Endothelial cell of umbilical vein (primary cell): ENCODE measurements at regions of chr19 and their contacts with region 1.

Region 1: DNA sequence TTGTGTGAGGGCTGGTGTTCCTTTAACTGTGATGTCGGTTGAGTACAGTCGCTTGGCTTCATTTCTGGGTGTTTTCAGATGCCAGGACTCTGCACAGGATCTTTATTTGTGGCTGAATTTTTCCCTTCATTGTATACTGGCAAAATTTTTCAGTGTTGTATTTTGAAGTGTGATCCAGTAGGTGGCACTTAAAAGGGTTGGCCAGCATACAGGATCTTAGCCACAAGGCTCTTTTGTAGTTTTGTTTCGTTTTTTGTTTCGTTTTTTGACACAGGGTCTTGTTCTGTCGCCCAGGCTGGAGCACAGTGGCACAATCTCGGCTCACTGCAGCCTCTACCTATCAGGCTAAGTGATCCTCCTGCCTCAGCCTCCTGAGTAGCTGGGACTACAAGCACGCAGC is 8.7 kb downstream of the FCAR start:
- DNase-seq: peak; percentile 9
- H3K4me3 ChIP-seq: no peak overlapping the region
- H3K27ac ChIP-seq: no peak overlapping the region
- H3K4me1 ChIP-seq: no peaks in the 10 kb centered on the region
- H3K27me3 ChIP-seq: no peaks in the 10 kb centered on the region
- CTCF ChIP-seq: no peak
- POLR2A ChIP-seq: no peak

Region 2: DNA sequence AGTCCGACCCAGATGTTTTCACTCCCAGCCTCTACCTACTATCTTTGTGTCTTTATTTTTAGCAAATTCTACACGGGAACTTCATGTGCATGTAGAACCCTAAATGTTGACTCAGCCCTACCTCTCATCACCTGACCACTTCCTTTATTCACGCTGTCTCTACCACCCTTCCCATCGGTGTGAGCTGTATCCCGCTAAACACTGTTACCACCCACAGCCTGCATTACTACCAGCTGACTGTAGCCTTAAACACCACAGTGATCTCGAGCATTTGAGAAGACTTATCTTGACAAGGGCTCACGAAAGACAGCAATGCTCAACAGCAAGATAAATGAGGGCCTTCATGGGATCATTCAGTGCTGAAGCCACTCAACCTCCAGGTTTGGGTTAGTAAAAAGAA is 38.3 kb after region 1 on chr19:
- CTCF ChIA-PET with region 1: interaction called, 23 read pairs
- POLR2A ChIA-PET with region 1: no interaction called
- dilution Hi-C with region 1: no loop called
- intact Hi-C with region 1: no loop called
- DNase-seq: no peak
- H3K4me3 ChIP-seq: no peak overlapping the region
- H3K27ac ChIP-seq: no peak overlapping the region
- H3K4me1 ChIP-seq: no peaks in the 10 kb centered on the region
- H3K27me3 ChIP-seq: no peaks in the 10 kb centered on the region
- CTCF ChIP-seq: no peak
- POLR2A ChIP-seq: no peak

Region 3: DNA sequence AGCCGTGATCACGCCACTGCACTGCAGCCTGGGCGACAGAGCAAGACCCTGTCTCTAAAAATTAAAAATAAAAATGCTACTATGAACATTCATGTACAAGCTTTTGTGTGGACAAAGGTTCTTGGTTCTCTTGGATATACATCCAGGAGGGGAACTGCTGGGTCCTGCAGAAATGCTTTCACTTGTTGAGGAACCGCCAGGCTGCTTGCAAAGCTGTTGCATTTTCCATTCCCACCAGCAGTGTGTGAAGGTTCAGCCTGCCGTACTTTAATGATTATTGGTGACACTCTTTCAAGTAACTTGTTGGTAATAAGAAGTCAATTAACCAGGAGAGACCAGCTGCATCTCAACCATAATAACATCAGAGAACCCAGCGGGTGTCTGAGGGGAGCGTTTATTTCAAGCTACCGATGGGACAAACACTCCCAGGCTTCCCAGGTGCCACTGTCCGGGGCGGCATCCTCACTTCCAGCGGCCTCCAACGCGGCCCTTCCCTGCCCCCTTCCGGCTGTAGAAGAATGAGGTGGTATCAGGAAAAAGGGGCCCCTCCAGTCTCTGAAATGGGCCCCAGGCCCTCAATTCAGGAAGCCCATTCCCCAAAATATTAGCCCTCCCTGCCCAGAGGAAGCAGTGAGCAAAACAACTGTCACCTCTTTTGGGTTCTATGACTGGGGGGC is 249.8 kb after region 1 on chr19:
- CTCF ChIA-PET with region 1: interaction called, 24 read pairs
- POLR2A ChIA-PET with region 1: no interaction called
- dilution Hi-C with region 1: no loop called
- intact Hi-C with region 1: no loop called
- DNase-seq: no peak
- H3K4me3 ChIP-seq: no peak overlapping the region
- H3K27ac ChIP-seq: no peak overlapping the region
- H3K4me1 ChIP-seq: no peaks in the 10 kb centered on the region
- H3K27me3 ChIP-seq: peaks cover 0 to 4% of the 10 kb centered on the region in 2 experiments
- CTCF ChIP-seq: peak; percentile 15 to 23
- POLR2A ChIP-seq: no peak